Calu3 (cell line): ENCODE measurements at regions of chr4 and their contacts with region 1.

Region 1: DNA sequence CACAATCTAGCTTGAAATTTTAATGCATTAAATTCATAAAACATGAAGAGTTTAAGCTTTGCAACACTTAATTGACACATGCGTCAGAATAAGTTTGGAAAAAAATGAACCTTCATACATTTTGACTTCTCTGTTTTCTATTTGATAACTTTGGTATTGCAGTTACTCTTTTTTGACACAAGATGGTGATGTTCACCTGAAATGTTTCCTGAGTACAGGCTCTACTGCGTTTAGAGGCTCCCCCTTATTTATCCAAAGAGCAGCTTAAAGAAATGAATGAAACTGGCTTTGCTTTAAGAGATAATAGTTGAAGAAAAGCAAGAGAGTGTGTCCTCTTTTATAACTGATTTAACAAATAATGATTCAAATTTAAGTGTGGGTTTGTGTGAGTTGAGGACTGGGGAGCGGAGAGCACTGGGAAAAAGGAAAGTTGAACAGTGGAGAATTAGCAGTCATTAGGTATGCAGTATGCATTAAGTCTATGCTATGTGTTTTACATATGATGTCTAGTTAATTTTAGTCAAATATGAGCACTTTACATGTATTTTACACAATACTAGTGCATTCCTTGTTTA is 180.6 kb upstream of the NUDT6 start:
- DNase-seq: no peak
- H3K4me3 Mint-ChIP-seq: no peak overlapping the region
- H3K27ac Mint-ChIP-seq: no peak overlapping the region
- H3K4me1 Mint-ChIP-seq: peaks cover 7% of the 10 kb centered on the region
- H3K27me3 Mint-ChIP-seq: no peaks in the 10 kb centered on the region
- CTCF ChIP-seq: peak; percentile 33

Region 2: DNA sequence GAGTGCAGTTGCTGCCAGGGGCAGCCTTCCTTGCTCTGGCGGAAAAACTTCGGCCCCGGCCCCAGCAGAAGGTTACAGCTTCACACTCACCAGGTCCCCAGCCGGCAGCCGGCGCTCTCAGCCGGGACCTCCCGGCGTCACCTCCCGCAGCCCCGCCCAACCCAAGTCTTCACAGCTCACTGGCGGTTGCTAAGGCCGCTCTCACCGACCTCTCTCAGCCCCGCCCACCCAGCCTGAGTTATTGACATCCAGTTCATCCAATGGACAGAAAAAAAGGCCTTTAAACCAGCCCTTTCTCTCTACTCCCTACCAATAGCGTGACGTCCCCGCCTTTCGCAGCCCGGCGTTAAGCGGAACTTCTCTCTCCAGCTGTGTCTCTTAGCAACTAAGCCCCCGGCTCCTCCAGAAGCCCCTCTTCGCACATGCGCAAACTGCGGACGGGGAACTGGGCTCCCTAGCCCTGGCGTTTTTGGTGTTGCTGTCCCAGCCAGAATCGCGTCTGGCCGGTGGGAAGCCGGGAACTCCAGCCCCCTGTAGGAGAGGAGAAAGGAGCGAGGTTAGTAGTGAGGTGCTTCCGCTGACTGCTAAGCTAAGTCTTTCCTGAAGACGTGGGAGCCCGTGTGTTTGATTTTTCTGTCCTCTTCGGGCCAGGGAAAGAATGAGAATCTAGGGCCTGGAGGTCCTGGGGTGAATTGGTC is 370.5 kb before region 1 on chr4 and contains the start of gene BBS12:
- CTCF ChIA-PET with region 1: no interaction called
- intact Hi-C with region 1: no loop called
- DNase-seq: peak; percentile 96
- H3K4me3 Mint-ChIP-seq: peak within 1 kb of the TSS; percentile 83
- H3K27ac Mint-ChIP-seq: peak within 1 kb of the TSS; percentile 92
- H3K4me1 Mint-ChIP-seq: no peaks in the 10 kb centered on the region
- H3K27me3 Mint-ChIP-seq: no peaks in the 10 kb centered on the region
- CTCF ChIP-seq: no peak
- total RNA-seq, gene BBS12: 2.4 TPM in 2 replicates

Region 3: DNA sequence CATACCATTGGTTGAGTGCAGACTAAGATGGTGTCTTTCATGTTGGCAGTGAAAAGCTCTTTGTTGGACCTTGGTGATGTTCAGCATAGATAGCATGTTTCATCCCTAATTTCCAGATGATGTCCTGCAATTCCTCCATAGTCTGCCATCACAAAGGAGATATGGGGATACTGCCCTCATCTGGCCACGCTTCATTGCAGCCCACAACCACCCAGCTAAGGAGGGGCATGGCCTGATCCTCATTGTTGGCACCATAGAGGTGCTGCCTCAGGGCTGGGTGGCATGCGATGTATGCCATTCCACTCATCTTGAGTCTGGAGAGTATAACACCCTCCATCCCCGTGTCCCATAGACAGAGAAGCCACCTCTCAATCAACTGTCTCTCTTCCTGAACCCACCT is 149.1 kb before region 1 on chr4:
- CTCF ChIA-PET with region 1: no interaction called
- intact Hi-C with region 1: no loop called
- DNase-seq: no peak
- H3K4me3 Mint-ChIP-seq: no peak overlapping the region
- H3K27ac Mint-ChIP-seq: no peak overlapping the region
- H3K4me1 Mint-ChIP-seq: no peaks in the 10 kb centered on the region
- H3K27me3 Mint-ChIP-seq: no peaks in the 10 kb centered on the region
- CTCF ChIP-seq: no peak

Region 4: GRCh38 chr4:123144616-123145015 is 41.6 kb after region 1 on chr4:
- CTCF ChIA-PET with region 1: no interaction called
- intact Hi-C with region 1: no loop called
- DNase-seq: no peak
- H3K4me3 Mint-ChIP-seq: no peak overlapping the region
- H3K27ac Mint-ChIP-seq: no peak overlapping the region
- H3K4me1 Mint-ChIP-seq: no peaks in the 10 kb centered on the region
- H3K27me3 Mint-ChIP-seq: no peaks in the 10 kb centered on the region
- CTCF ChIP-seq: no peak

Region 5: GRCh38 chr4:123390846-123391456 is 288.0 kb after region 1 on chr4:
- CTCF ChIA-PET with region 1: no interaction called
- intact Hi-C with region 1: loop called (anchors 2 kb)
- DNase-seq: no peak
- H3K4me3 Mint-ChIP-seq: no peak overlapping the region
- H3K27ac Mint-ChIP-seq: no peak overlapping the region
- H3K4me1 Mint-ChIP-seq: no peaks in the 10 kb centered on the region
- H3K27me3 Mint-ChIP-seq: no peaks in the 10 kb centered on the region
- CTCF ChIP-seq: no peak

Region 6: DNA sequence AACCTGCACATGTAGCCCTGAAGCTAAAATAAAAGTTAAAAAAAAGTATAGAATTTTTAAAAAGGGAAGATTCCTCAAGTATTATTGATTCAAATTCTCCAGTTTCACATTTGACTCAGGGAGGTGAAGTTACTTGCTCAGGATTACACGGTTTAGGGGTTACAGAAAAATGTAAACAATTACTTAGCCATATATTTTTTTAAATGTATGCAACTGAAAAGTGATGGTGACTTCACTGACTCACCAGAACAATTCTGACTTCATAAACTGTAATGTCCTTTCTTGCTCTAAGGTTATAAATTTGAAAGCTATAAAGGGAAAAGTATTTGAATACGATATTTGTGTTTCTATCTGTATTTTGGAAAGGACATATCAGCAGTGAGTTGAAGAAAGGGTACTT is 664.8 kb after region 1 on chr4:
- CTCF ChIA-PET with region 1: no interaction called
- intact Hi-C with region 1: loop called (anchors 10 kb)
- DNase-seq: no peak
- H3K4me3 Mint-ChIP-seq: no peak overlapping the region
- H3K27ac Mint-ChIP-seq: no peak overlapping the region
- H3K4me1 Mint-ChIP-seq: peaks cover 3% of the 10 kb centered on the region
- H3K27me3 Mint-ChIP-seq: no peaks in the 10 kb centered on the region
- CTCF ChIP-seq: no peak